MCF 10A (cell line): ENCODE measurements at regions of chr17 and their contacts with region 1.

Region 1: DNA sequence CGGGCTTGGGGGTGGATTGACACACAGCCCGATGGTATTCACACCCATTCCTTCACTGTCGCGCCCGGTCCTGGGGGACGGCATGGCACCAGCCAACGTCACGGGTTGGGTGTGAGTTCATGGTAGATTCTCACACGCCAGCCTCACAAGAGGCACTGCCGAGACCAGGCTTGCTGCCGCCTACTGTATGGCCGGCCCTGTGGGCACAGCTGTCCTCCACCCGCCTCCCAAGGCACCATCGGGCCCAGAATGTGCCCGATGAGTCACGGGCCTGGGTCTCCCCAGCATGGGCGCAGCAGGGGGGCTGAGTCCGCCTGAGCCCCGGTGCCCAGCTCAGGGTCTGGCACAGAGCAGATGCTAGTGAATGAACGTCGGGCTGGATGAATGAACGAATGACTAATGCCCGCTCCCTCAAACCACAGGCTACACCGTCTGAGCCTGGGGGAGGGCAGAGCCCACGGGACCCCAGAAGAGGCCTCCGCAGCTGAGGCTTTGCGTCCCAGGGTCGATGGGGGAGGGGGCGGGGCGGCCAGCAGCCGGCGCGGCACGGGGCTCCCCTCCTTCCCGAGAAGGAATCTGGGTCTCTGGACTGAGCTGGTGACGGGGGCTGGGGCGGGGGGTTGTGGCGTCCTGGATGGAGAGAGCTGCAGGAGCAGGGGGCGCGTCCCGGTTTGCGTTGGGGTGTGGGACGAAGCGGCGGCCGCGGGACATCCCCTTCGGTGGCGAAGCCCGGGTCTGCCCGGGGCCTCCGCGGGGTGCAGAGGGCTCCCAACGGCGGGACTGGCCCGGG is 829 bp downstream of the PITPNM3 start:
- DNase-seq: peak; percentile 79
- H3K4me3 Mint-ChIP-seq: peak overlapping the region; percentile 80
- H3K27ac Mint-ChIP-seq: peak overlapping the region; percentile 79
- H3K4me1 Mint-ChIP-seq: peaks cover 45% of the 10 kb centered on the region
- H3K27me3 Mint-ChIP-seq: no peaks in the 10 kb centered on the region
- CTCF ChIP-seq: no peak

Region 2: DNA sequence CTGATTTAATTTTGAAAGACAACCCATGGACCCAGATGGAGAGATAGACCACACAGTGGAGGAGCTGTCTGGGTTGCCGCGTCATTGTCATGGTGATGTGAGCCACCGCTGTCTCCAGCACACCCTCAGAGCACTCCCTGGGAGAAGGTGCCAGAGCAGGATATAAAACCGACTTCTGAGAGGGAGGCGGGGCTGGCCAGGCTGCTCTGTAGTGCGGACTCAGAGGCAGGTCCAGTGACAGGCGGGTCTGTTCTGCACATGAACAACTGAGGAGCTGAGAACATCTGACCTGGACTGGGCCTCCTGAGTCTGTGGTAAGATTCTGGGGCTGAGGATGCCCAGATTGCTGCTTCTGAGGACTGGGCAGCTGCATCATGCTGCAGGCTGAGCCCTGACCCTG is 754.9 kb before region 1 on chr17:
- CTCF ChIA-PET with region 1: no interaction called
- POLR2A ChIA-PET with region 1: no interaction called
- intact Hi-C with region 1: no loop called
- DNase-seq: no peak
- H3K4me3 Mint-ChIP-seq: no peak overlapping the region
- H3K27ac Mint-ChIP-seq: no peak overlapping the region
- H3K4me1 Mint-ChIP-seq: no peaks in the 10 kb centered on the region
- H3K27me3 Mint-ChIP-seq: peaks cover 26% of the 10 kb centered on the region
- CTCF ChIP-seq: no peak

Region 3: DNA sequence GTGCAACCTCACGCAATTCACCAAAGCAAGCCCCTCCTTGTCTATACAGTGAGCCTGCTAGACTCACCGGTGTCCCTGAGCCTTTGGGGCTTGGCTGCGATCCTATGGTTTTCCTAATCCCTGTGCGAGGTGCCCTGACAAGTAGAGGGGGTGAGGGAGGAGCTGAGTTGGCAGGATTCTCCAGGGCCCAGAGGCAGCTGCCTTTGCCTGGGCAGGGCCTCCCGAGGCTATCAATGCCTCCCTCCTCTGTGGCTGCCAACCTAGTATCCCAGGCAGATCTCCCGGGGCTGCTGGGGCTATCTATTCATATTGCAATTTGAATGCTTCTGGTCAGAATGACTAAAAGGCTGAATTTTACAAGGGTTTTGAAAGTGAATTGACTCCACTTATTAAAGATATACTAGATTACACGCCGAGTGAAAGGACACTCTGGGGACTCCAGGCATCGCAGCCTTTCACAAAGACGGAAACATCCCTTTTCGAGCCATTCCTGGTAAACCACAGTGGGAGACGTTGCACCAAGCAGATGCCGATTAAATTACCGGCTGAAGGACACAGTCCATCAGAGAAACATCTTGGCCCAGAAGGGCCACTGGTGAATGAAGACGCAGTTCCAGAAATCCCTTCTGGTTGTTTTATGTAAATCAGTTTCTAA is 12.1 kb after region 1 on chr17:
- CTCF ChIA-PET with region 1: interaction called, 5 read pairs
- POLR2A ChIA-PET with region 1: interaction called, 19 read pairs
- intact Hi-C with region 1: no loop called
- DNase-seq: peak; percentile 95
- H3K4me3 Mint-ChIP-seq: no peak overlapping the region
- H3K27ac Mint-ChIP-seq: peak overlapping the region; percentile 63
- H3K4me1 Mint-ChIP-seq: peaks cover 23% of the 10 kb centered on the region
- H3K27me3 Mint-ChIP-seq: no peaks in the 10 kb centered on the region
- CTCF ChIP-seq: no peak